Head of caudate nucleus (tissue), 42 donors: ENCODE measurements at regions of chr20 and their contacts with region 1.

Region 1: GRCh38 chr20:22810626-22811569 is 224.2 kb upstream of the SSTR4 start:
- DNase-seq: no peak

Region 2: DNA sequence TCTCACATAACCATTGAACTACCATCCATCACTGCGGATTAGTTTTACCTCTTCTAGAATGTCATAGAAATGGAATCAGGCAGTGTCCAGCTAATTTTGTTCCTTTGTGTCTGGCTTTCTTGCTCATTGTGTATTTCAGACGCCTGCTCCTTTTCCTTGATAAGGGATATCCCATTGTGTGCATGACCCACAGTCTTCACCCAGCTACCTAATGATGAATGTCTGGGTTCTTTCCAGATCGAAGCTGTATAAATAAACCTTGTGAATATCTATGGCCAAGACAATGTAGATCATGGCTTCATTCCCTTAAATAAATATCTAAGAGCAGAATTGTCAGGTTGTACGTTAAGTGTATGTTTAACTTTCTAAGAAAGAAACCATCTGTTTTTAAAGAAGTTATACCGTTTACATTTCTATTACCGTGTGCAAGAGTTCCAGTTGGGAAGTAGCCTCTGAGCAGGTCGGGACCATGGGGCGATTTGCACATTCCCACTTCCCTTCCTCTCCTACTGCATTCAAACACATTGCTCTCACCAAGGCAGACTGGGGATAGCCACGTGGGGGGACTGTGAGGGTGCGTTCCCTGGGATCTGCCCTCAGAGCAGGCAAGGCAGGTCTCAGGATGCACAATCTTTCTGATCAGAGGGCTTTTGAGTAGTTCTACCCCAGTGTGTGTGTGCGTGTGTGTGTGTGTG is 262.1 kb after region 1 on chr20:
- intact Hi-C with region 1: loop called (anchors 5 kb)
- DNase-seq: no peak